Caki2 (cell line): ENCODE measurements at regions of chr2 and their contacts with region 1.

Region 1: DNA sequence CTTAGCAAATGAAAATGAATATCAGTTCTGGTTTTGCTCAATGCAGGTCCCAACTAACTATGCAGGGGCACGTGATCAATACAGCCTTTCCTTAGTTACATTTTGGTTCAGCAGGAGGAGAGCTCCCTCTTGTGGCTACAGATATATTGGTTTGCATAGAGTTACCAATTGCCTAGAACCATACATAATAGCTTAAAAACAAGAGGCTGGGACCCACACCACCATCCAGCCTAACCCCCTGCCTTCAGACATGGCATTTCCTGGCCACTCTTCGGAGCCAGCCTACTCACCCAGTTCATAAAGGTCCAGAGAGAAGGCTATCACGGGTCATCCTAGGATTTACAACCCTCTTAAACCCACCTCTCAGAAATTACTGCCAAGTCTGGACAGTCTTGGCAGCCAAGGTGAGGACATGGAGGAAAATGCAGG is 10.5 kb downstream of the CCDC93 start:
- DNase-seq: peak; percentile 74

Region 2: DNA sequence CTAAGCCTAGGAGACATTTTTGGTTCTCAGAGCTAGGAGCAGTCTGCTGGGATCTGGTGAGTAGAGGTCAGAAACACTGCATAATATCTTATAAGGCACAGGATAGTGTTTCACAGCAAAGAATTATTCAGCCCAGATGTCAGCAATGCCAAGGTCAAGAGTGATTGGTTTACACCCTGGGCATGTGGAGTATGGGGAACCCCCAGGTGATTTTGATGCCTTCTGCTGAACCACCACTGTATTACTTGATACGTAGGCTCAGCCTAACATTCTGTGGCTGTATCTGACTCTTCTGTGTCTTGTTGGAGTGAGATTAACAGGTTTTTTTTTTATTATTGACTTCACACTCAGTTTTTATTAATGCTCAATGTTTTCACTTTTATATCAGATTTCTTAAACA is 183.0 kb before region 1 on chr2:
- in situ Hi-C with region 1: loop called (anchors 10 kb)
- DNase-seq: no peak